Thyroid gland (tissue), 4 donors: ENCODE measurements at regions of chr16 and their contacts with region 1.

Region 1: GRCh38 chr16:72008424-72009216 is at the start of gene DHODH:
- DNase-seq: peak; percentile 98 to 99
- H3K4me3 ChIP-seq: peak within 1 kb of the TSS; percentile 57 to 90 (median 69)
- H3K27ac ChIP-seq: no peak within 1 kb of the TSS
- H3K4me1 ChIP-seq: no peaks in the 10 kb centered on the region
- H3K27me3 ChIP-seq: no peaks in the 10 kb centered on the region
- CTCF ChIP-seq: peak in 3 of 6 experiments; percentile 11 to 32 (median 22)
- POLR2A ChIP-seq: peak in 1 of 2 donors; percentile 61
- total RNA-seq, gene DHODH: 5.5 to 13.4 (median 7.4) TPM

Region 2: DNA sequence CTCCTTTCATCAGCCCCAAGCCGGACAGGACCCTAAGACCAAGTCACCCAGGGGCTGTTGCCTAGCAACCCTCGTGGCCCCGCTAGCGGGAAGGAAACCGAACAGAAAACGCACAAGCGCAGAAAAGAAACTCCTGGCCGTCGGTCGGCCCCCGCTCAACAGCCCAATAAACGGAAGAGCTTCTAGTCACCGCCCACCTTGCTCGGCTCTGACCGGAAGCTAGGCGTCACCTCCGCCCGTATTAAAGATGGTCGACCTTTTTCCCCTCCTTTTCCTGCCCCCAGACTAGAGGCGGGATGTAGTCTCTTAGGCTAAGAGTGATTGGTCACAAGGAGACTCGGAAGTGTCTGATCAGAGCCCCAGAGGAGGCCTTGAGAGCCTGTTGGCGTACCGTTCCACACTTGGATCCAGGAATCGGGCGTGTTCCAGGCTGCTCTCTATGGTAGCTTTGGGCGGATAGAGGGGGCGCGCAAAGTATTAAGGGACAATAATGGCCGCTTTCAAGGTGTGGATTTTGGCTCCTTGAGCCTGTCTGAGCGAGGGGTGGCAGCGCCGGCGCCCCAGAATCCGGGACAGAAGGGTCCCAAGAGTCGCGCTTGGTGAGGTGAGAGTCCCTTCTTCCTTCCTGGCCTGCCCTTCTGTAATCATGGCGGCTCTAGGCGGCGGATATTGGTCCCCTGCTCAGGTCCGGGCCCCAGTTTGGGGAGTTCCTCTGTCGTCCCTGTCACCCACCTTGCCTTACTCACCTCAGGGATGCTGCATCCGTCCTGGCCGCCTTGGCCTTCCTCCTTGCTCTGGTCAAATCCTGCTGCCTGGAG is 85.0 kb after region 1 on chr16 and contains the starts of genes DHX38 and TXNL4B:
- intact Hi-C with region 1: loop called (anchors 5 kb)
- DNase-seq: peak; percentile 94 to 96
- H3K4me3 ChIP-seq: peak within 1 kb of the TSS; percentile 58 to 88 (median 82)
- H3K27ac ChIP-seq: peak within 1 kb of the TSS; percentile 81 to 89 (median 83)
- H3K4me1 ChIP-seq: peaks cover 16 to 18% of the 10 kb centered on the region in 2 donors
- H3K27me3 ChIP-seq: no peaks in the 10 kb centered on the region
- CTCF ChIP-seq: no peak
- POLR2A ChIP-seq: peak in 1 of 2 donors; percentile 88
- total RNA-seq, gene DHX38: 31.7 to 52.7 (median 47.7) TPM
- total RNA-seq, gene TXNL4B: 10.7 to 15.0 (median 13.1) TPM